ENCODE measurements at regions of chr18 and their contacts with region 1.

Region 1: GRCh38 chr18:12497291-12497690 is 89.6 kb downstream of the PRELID3A start:
- DNase-seq: no peak
- ATAC-seq: no peak
- H3K4me3 ChIP-seq: no peak overlapping the region
- H3K27ac ChIP-seq: no peak overlapping the region
- H3K4me1 ChIP-seq: no peaks in the 10 kb centered on the region
- H3K27me3 ChIP-seq: no peaks in the 10 kb centered on the region
- CTCF ChIP-seq: no peak

Region 2: GRCh38 chr18:12442946-12443345 is 54.3 kb before region 1 on chr18:
- intact Hi-C with region 1: loop called in 1 of 10 experiments (anchors 10 kb)
- DNase-seq: no peak
- ATAC-seq: no peak
- H3K4me3 ChIP-seq: no peak overlapping the region
- H3K27ac ChIP-seq: peak overlapping the region in 1 of 10 donors; percentile 55
- H3K4me1 ChIP-seq: peaks cover 0 to 7% (median 0%) of the 10 kb centered on the region in 9 donors
- H3K27me3 ChIP-seq: no peaks in the 10 kb centered on the region
- CTCF ChIP-seq: no peak

Region 3: GRCh38 chr18:13095466-13095865 is 598.2 kb after region 1 on chr18:
- intact Hi-C with region 1: no loop called
- DNase-seq: no peak
- ATAC-seq: no peak
- H3K4me3 ChIP-seq: no peak overlapping the region
- H3K27ac ChIP-seq: no peak overlapping the region
- H3K4me1 ChIP-seq: peaks cover 0 to under 1% (median 0%) of the 10 kb centered on the region in 9 donors
- H3K27me3 ChIP-seq: no peaks in the 10 kb centered on the region
- CTCF ChIP-seq: no peak

Measured in heart right ventricle (tissue), 16 donors.